Right ventricle myocardium inferior (tissue), 1 donor: ENCODE measurements at regions of chr4 and their contacts with region 1.

Region 1: DNA sequence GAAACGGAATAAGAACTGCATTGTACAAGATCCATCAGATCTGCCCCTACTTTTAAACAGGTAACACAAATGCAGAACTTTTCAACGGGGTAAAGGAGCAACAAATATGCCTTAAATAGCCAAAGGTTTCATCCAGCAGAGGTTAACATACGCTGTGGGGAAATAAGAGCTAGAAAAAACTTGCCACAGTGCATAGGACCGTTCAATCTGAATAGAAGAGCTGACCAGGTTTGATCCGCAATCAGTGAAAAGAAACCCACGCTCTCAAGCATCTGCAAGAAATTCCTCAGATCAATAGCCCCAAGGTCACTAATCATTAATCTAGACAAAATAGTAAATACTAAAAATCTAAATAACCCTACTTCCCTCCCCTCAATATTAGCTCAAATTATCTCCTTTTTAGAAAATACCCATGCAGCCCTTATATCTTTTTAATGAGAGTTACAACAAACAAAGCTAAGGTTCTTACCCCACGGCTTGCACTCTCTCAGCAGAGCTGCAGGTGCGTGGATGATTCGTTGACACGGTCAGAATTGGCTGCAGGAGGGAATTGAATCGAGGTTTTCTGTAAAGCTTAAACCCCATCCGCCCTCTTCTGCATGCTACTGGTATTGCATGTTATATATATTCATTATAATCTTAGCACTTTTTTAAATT is at the start of gene TLR10:
- DNase-seq: no peak
- ATAC-seq: peak; percentile 53
- total RNA-seq, gene TLR10: not detected

Region 2: GRCh38 chr4:38062088-38062893 is 720.3 kb before region 1 on chr4:
- intact Hi-C with region 1: loop called (anchors 2 kb)
- DNase-seq: no peak
- ATAC-seq: peak; percentile 77

Region 3: GRCh38 chr4:38179690-38180377 is 602.7 kb before region 1 on chr4:
- intact Hi-C with region 1: loop called (anchors 5 kb)
- DNase-seq: no peak
- ATAC-seq: peak; percentile 51

Region 4: GRCh38 chr4:38759113-38759789 is 23.3 kb before region 1 on chr4:
- intact Hi-C with region 1: loop called (anchors 2 kb)
- DNase-seq: peak; percentile 78
- ATAC-seq: peak; percentile 85